Ascending aorta (tissue), 2 donors: ENCODE measurements at regions of chr17 and their contacts with region 1.

Region 1: GRCh38 chr17:39754161-39754951 is 16.6 kb downstream of the GRB7 start:
- DNase-seq: peak; percentile 73 to 96
- H3K4me3 ChIP-seq: peak overlapping the region; percentile 74 to 80
- H3K27ac ChIP-seq: peak overlapping the region; percentile 87 to 90
- H3K4me1 ChIP-seq: peaks cover 3 to 17% of the 10 kb centered on the region in 2 donors
- H3K27me3 ChIP-seq: no peaks in the 10 kb centered on the region
- CTCF ChIP-seq: peak; percentile 88 to 99 (median 99)

Region 2: GRCh38 chr17:39461113-39461925 is 293.0 kb before region 1 on chr17 and contains the start of gene CDK12:
- intact Hi-C with region 1: loop called (anchors 5 kb)
- DNase-seq: peak; percentile 93 to 98
- H3K4me3 ChIP-seq: peak within 1 kb of the TSS; percentile 68 to 81
- H3K27ac ChIP-seq: peak within 1 kb of the TSS; percentile 96
- H3K4me1 ChIP-seq: peaks cover 7 to 26% of the 10 kb centered on the region in 2 donors
- H3K27me3 ChIP-seq: no peaks in the 10 kb centered on the region
- CTCF ChIP-seq: no peak
- total RNA-seq, gene CDK12: 25.2 TPM

Region 3: DNA sequence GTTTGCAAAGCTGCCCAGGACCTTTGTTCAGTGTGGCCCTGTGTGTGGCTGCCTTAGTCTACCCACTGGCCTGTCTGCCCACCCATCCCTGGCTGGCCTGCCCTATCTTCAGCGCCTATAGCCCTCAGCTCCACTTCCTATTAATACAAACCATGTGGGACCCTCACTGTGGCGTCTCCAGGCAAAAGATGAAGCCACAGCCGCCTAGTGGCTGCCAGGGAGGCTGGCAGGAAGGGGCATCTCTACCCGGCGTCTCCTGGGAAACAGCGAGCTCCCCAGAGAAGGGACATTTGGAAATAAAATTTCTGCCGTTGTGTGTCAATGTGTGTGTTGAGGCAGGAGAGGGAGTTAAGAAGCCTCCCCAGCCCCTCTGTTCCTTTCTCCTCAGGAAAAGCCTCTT is 178.2 kb before region 1 on chr17:
- intact Hi-C with region 1: no loop called
- DNase-seq: no peak
- H3K4me3 ChIP-seq: no peak overlapping the region
- H3K27ac ChIP-seq: no peak overlapping the region
- H3K4me1 ChIP-seq: peaks cover 0 to 8% of the 10 kb centered on the region in 2 donors
- H3K27me3 ChIP-seq: no peaks in the 10 kb centered on the region
- CTCF ChIP-seq: peak in 2 of 3 experiments; percentile 9 to 39

Region 4: GRCh38 chr17:39621523-39622379 is 132.6 kb before region 1 on chr17:
- intact Hi-C with region 1: loop called (anchors 1 kb)
- DNase-seq: peak; percentile 53 to 93
- H3K4me3 ChIP-seq: no peak overlapping the region
- H3K27ac ChIP-seq: no peak overlapping the region
- H3K4me1 ChIP-seq: peaks cover 1 to 5% of the 10 kb centered on the region in 2 donors
- H3K27me3 ChIP-seq: peaks cover 4% of the 10 kb centered on the region
- CTCF ChIP-seq: peak; percentile 98 to 100 (median 100)

Region 5: DNA sequence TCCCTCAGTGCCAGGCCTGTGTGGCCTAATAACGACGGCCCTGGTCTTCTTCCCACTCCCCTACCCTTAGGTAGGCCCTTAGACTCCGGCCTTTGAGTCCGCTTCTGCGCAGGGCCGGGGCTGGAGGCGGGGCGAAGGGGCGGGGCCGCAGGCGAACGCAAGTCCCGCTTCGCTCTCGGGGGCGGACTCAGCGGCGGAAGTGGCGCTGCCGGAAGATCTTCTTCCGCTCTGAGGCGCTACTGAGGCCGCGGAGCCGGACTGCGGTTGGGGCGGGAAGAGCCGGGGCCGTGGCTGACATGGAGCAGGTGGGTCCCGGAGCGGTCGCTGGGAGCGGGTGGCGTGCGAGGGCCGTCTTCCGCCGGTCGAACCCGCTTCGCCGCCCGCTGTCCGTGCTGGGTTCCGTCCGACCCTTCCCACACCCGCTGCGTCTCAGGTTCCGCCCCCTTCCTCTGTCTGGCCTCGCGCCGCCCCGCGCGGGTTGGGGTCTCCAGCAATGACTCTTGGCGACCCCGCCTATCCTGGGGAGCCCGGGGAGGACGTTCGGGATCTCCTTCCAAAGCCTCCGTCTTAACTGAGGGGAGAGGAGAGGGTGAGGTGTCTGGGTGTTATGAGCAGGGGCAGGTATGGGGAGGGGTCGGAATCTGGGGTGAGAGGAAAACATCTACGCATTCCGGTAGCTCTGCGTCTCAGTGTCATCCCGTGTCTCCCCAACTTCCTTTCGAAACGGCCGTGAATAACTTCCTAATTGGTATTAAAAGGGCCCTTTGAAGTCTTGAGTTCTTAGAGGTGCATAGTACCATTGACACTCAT is 117.2 kb before region 1 on chr17 and contains the start of gene STARD3:
- intact Hi-C with region 1: loop called (anchors 5 kb)
- DNase-seq: peak; percentile 63 to 93
- H3K4me3 ChIP-seq: peak within 1 kb of the TSS; percentile 68 to 84
- H3K27ac ChIP-seq: peak within 1 kb of the TSS; percentile 83 to 89
- H3K4me1 ChIP-seq: peaks cover 11 to 27% of the 10 kb centered on the region in 2 donors
- H3K27me3 ChIP-seq: no peaks in the 10 kb centered on the region
- CTCF ChIP-seq: peak; percentile 13 to 34 (median 14)
- total RNA-seq, gene STARD3: 87.6 TPM

Region 6: GRCh38 chr17:39687811-39688518 is 66.4 kb before region 1 on chr17 and contains the start of gene PGAP3:
- intact Hi-C with region 1: loop called (anchors 1 kb)
- DNase-seq: peak; percentile 60 to 93
- H3K4me3 ChIP-seq: peak within 1 kb of the TSS; percentile 50 to 79
- H3K27ac ChIP-seq: peak within 1 kb of the TSS; percentile 92 to 95
- H3K4me1 ChIP-seq: peaks cover 0 to 13% of the 10 kb centered on the region in 2 donors
- H3K27me3 ChIP-seq: no peaks in the 10 kb centered on the region
- CTCF ChIP-seq: no peak
- total RNA-seq, gene PGAP3: 29.5 TPM

Region 7: GRCh38 chr17:39737760-39738567 is 16.4 kb before region 1 on chr17 and contains the start of gene GRB7:
- intact Hi-C with region 1: loop called (anchors 1 kb)
- DNase-seq: no peak
- H3K4me3 ChIP-seq: peak within 1 kb of the TSS; percentile 9 to 47
- H3K27ac ChIP-seq: no peak within 1 kb of the TSS
- H3K4me1 ChIP-seq: peaks cover 4 to 19% of the 10 kb centered on the region in 2 donors
- H3K27me3 ChIP-seq: peaks cover 28% of the 10 kb centered on the region
- CTCF ChIP-seq: no peak
- total RNA-seq, gene GRB7: 1.6 TPM